ENCODE measurements at regions of chr11 and their contacts with region 1.

Region 1: DNA sequence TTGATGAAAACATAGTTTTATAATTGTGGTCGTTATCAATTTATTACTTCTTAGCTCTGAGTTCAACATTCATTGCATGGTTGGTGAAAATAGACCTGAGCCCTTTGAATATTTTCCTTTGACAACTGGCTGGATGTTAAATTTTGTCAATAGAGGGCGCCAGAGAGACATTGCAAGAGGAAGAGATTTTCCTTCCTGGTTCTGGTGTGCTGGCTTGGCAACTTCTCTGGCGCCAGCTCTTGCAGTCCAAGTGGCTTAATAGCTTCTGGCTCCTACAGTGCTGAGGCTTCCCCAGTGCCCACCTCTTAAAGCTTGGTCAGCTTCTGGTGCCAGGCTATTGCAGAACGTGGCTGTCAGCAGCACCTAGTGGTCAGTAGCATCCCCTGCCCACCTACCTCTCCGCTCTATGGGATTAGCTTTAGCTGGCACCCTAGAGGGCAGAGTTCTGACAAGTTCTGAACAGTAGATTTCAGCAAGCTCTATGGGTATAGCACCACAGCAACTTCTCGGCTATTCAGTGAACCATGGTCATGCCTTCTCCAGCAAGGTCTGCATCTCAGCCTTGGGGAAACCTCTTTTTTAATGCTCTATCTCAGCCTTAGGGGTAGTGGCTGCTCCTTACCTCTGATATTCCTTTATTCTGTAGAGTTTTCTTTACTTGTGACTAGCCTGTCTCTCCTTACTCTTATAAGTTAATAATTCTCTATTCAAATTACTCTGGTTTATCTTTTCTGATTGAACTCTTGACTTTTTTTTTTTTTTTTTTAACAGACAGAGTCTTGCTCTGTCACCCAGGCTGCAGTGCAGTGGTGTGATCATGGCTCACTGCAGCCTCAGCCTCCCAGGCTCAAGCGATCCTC is 59.4 kb downstream of the ACER3 start:
- DNase-seq: peak; percentile 60 to 87
- ATAC-seq: peak; percentile 96 to 98
- H3K4me3 ChIP-seq: no peak overlapping the region
- H3K27ac ChIP-seq: peak overlapping the region; percentile 6 to 74; a peak in 4 of 6 replicates
- H3K4me1 ChIP-seq: peaks cover 14% of the 10 kb centered on the region; the same call in 2 of the 3 replicates
- CTCF ChIP-seq: peak; percentile 99
- EP300 ChIP-seq: no peak
- POLR2A ChIP-seq: no peak
- RAD21 ChIP-seq: peak; percentile 75 to 91

Region 2: GRCh38 chr11:76734456-76735420 is 185.4 kb before region 1 on chr11:
- CTCF ChIA-PET with region 1: interaction called, 121 read pairs
- POLR2A ChIA-PET with region 1: no interaction called
- DNase-seq: no peak
- ATAC-seq: peak in 1 of 2 experiments; percentile 6; a peak in 2 of 6 replicates
- H3K4me3 ChIP-seq: no peak overlapping the region
- H3K27ac ChIP-seq: peak overlapping the region; percentile 77 to 79
- H3K4me1 ChIP-seq: peaks cover 24% of the 10 kb centered on the region
- CTCF ChIP-seq: no peak
- EP300 ChIP-seq: no peak
- POLR2A ChIP-seq: no peak
- RAD21 ChIP-seq: no peak

Region 3: GRCh38 chr11:76850815-76851214 is 69.3 kb before region 1 on chr11:
- CTCF ChIA-PET with region 1: interaction called, 10 read pairs
- POLR2A ChIA-PET with region 1: no interaction called
- DNase-seq: no peak
- ATAC-seq: no peak
- H3K4me3 ChIP-seq: no peak overlapping the region
- H3K27ac ChIP-seq: no peak overlapping the region
- H3K4me1 ChIP-seq: no peaks in the 10 kb centered on the region
- CTCF ChIP-seq: no peak
- EP300 ChIP-seq: no peak
- POLR2A ChIP-seq: no peak
- RAD21 ChIP-seq: no peak

Region 4: DNA sequence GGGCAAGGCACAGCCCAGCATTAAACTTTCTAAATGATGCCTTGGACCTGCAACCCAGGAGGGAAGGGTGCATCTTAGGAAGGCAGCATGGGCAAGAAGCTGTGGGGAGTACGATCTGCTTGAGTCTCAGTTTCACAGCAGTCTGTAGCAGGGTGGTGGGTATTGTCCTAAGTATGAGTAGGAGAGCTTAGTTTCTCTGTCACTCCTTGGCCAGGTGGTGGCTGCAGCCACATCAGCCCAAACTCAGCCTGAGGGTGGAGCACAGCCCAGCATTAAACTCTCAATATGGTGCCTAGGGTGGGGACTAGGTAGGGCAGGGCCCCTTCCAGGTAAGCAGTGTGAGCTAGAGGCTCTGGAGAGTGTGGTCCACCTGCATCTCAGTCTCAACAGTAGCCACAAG is 26.1 kb after region 1 on chr11:
- CTCF ChIA-PET with region 1: interaction called, 25 read pairs
- POLR2A ChIA-PET with region 1: no interaction called
- DNase-seq: no peak
- ATAC-seq: no peak
- H3K4me3 ChIP-seq: no peak overlapping the region
- H3K27ac ChIP-seq: no peak overlapping the region
- H3K4me1 ChIP-seq: no peaks in the 10 kb centered on the region
- CTCF ChIP-seq: no peak
- EP300 ChIP-seq: no peak
- POLR2A ChIP-seq: no peak
- RAD21 ChIP-seq: no peak

Region 5: DNA sequence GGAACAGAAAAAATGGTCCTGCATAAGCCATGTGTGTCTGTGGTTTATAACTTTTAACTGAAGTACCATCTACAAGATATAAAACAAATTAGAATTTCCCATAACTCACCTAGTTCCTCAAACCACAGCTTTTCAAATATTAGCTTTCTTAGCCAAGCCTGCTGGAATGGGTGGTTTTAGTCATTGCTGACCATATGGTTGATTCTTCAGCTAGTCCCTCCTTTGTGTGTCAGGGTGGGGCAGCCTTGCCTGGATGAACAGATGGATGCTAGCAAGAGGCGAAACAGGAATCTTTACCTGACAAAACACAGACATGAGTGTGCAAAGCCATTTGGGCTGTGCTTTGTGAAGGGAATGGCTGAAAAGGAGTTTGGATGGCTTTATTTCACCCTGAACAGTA is 107.2 kb after region 1 on chr11:
- CTCF ChIA-PET with region 1: interaction called, 10 read pairs
- POLR2A ChIA-PET with region 1: no interaction called
- DNase-seq: peak in 1 of 2 experiments; percentile 40
- ATAC-seq: peak in 1 of 2 experiments; percentile 22; a peak in 2 of 6 replicates
- H3K4me3 ChIP-seq: no peak overlapping the region
- H3K27ac ChIP-seq: 0 out of 6 replicates have a peak overlapping the region, but pooled peaks of 1 of the 2 experiments have one; percentile 1
- H3K4me1 ChIP-seq: peaks cover 22% of the 10 kb centered on the region
- CTCF ChIP-seq: no peak
- EP300 ChIP-seq: no peak
- POLR2A ChIP-seq: no peak
- RAD21 ChIP-seq: no peak

Region 6: DNA sequence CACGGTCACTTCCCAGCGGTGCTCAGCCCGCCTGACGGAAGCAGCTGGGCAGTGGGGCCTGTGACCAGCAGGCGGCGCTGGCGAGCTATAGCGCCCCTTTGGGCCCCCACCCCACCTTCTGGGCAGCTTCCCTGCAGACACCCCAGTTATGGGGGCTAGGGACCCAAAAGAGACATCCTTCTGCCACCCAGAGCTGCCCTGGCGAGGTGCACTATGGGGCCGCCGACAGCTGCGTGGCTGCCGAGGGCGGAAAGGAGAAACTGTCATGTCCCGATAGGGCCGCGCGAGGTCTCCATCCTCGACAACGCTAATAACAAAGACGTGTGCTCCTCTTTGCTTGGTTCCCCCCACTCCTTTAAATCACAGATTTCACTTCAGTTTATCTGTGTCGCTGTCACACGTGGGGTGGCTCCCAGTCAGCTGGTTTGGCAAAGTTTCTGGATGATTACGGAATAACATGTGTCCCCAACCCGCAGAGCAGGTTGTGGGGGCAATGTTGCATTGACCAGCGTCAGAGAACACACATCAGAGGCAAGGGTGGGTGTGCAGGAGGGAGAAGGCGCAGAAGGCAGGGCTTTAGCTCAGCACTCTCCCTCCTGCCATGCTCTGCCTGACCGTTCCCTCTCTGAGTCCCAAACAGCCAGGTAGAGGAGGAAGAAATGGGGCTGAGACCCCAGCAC is 207.3 kb after region 1 on chr11:
- CTCF ChIA-PET with region 1: interaction called, 11 read pairs
- POLR2A ChIA-PET with region 1: no interaction called
- DNase-seq: peak; percentile 36 to 63
- ATAC-seq: peak; percentile 67 to 89
- H3K4me3 ChIP-seq: peak overlapping the region; percentile 37
- H3K27ac ChIP-seq: peak overlapping the region in 1 of 2 experiments; percentile 61; a peak in 3 of 6 replicates
- H3K4me1 ChIP-seq: no peaks in the 10 kb centered on the region
- CTCF ChIP-seq: peak; percentile 99
- EP300 ChIP-seq: no peak
- POLR2A ChIP-seq: no peak
- RAD21 ChIP-seq: peak; percentile 69 to 86